Activated naive CD4-positive, alpha-beta T cell treated with anti-CD3 and anti-CD28 coated beads for 36 hours (primary cell): ENCODE measurements at regions of chr20 and their contacts with region 1.

Region 1: DNA sequence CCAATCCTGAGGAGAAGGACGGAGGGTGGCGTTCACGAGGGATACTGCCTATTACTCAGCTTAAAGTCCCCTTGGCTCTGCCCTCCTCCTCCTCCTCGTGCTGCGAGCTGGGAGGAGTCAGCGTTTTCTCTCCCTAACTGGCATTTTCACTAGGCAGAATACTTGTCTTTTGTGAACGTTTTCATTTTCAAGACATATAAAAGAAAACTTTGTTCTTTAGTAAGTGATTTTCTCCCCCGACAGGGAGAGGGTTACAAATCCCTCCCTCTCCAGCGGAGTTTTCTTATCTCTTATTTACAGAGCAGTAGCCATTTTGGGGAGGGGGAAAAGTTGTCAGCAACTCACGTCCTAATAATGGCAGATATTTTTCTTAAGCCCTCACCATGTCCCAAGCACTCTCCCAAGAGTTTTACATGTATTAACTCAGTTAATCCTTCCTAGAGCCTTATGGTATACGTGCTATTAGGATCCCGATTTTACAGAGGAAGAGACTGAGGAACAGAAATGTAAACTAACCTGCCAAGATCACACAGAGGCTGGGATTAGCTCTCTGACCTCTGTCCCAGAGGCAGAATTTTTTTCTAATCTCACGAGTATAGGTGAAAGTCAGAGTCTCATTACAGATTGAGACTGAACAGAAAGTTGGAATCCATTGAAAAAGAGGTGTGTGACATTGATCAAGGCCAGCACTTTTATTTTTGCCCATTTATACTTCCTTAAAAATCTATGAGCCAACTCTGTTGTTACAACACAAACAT is 30.0 kb upstream of the ZNF217 start:
- DNase-seq: peak; percentile 65
- H3K4me3 Mint-ChIP-seq: peak overlapping the region; percentile 74
- H3K27ac Mint-ChIP-seq: peak overlapping the region; percentile 92
- H3K4me1 Mint-ChIP-seq: peaks cover 40% of the 10 kb centered on the region
- H3K27me3 Mint-ChIP-seq: no peaks in the 10 kb centered on the region

Region 2: DNA sequence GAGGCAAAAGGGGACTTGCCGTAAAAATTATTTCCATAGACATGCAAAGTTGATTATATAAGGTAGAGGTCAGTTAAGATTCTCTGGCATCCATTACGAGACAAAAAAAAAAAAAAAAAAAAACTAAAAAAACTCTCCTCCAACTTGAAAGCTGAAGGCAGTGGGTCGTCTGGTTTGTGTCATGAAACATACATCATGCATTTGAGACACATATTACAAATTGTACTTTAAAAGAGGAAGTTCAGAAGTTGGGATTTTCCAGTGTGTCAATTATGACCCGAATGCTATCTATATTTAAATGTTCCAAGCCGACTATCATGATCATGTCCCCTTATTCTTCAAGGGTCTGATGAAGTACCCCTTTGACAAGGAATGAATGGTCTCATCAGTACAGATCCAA is 155.0 kb before region 1 on chr20:
- CTCF ChIA-PET with region 1: no interaction called
- intact Hi-C with region 1: no loop called
- DNase-seq: no peak
- H3K4me3 Mint-ChIP-seq: no peak overlapping the region
- H3K27ac Mint-ChIP-seq: no peak overlapping the region
- H3K4me1 Mint-ChIP-seq: no peaks in the 10 kb centered on the region
- H3K27me3 Mint-ChIP-seq: no peaks in the 10 kb centered on the region

Region 3: DNA sequence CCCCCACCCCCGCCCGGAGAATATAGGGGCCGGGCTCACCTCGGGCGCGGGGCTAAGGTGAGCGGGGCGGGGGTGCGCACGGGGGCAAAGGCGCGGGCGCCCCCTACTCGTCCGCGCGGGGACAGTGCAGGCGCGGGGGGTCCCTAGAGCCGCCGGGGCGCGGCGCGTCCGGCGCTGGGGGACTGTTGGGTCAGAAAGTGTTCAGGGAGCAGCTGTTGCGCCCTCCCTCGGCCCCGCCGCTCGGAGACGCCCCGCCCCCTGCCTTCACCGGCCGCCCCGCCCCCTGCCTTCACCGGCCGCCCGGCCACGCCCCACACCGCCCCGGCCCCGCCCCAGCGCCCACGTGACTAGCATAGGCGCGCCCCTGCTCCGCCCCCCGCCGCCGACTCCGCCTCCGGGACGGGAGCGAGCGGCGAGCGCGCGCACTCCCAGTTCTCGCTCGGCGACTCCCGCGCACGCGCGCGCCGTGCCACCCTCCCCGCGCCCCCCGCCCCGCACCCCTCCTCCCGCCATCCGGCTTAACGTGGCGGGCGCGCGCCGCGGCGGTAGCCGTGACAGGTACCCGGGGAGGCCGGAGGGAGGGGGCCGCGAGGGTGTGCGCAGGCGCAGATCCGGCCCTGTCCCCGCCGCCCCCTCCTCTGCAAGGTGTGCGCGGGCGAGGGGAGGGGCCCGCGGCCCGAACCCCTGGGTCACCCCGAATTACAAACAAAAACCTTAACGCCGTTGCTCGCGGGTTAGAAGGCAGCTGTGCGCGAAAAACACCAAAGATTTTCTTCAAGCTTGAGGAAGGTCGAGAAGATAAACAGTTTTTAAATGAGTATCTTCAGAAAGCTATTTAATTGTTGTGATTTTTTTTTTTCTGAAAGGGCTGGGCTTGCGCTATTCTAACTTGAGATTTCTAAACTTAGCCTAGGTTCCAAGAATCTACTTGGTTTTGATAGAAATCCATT is 29.3 kb before region 1 on chr20:
- CTCF ChIA-PET with region 1: no interaction called
- intact Hi-C with region 1: loop called (anchors 2 kb)
- DNase-seq: peak; percentile 96
- H3K4me3 Mint-ChIP-seq: peak overlapping the region; percentile 94
- H3K27ac Mint-ChIP-seq: peak overlapping the region; percentile 99
- H3K4me1 Mint-ChIP-seq: peaks cover 51% of the 10 kb centered on the region
- H3K27me3 Mint-ChIP-seq: no peaks in the 10 kb centered on the region

Region 4: GRCh38 chr20:53609491-53610445 is 13.9 kb before region 1 on chr20:
- CTCF ChIA-PET with region 1: interaction called, 5 read pairs
- intact Hi-C with region 1: loop called (anchors 1 kb)
- DNase-seq: peak; percentile 91
- H3K4me3 Mint-ChIP-seq: peak overlapping the region; percentile 79
- H3K27ac Mint-ChIP-seq: peak overlapping the region; percentile 98
- H3K4me1 Mint-ChIP-seq: peaks cover 33% of the 10 kb centered on the region
- H3K27me3 Mint-ChIP-seq: no peaks in the 10 kb centered on the region

Region 5: GRCh38 chr20:53660078-53660909 is 36.7 kb after region 1 on chr20:
- CTCF ChIA-PET with region 1: interaction called, 3 read pairs
- intact Hi-C with region 1: loop called (anchors 5 kb)
- DNase-seq: peak; percentile 56
- H3K4me3 Mint-ChIP-seq: peak overlapping the region; percentile 77
- H3K27ac Mint-ChIP-seq: peak overlapping the region; percentile 88
- H3K4me1 Mint-ChIP-seq: peaks cover 61% of the 10 kb centered on the region
- H3K27me3 Mint-ChIP-seq: no peaks in the 10 kb centered on the region

Region 6: GRCh38 chr20:54044156-54044555 is 420.5 kb after region 1 on chr20:
- CTCF ChIA-PET with region 1: no interaction called
- intact Hi-C with region 1: no loop called
- DNase-seq: no peak
- H3K4me3 Mint-ChIP-seq: no peak overlapping the region
- H3K27ac Mint-ChIP-seq: no peak overlapping the region
- H3K4me1 Mint-ChIP-seq: peaks cover 5% of the 10 kb centered on the region
- H3K27me3 Mint-ChIP-seq: no peaks in the 10 kb centered on the region